HCT116 (cell line): ENCODE measurements at regions of chr20 and their contacts with region 1.

Region 1: DNA sequence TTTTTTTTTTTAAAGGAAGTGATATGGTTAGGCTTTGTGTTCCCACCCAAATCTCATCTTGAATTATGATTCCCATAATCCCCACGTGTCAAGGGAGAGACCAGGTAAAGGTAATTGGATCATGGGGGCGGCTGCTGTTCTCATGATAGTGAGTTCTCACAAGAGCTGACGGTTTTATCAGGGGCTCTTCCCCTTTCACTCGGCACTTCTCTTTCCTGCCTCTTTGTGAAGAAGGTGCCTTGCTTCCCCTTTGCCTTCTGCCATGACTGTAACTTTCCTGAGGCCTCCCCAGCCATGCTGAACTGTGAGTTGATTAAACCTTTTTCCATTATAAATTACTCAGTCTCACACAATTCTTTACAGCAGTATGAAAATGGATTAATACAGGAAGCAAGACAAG is 64.3 kb downstream of the ZFP64 start:
- DNase-seq: no peak
- ATAC-seq: no peak
- H3K4me3 ChIP-seq: no peak overlapping the region
- H3K27ac ChIP-seq: no peak overlapping the region
- H3K4me1 ChIP-seq: no peaks in the 10 kb centered on the region
- H3K27me3 ChIP-seq: no peaks in the 10 kb centered on the region
- CTCF ChIP-seq: no peak
- POLR2A ChIP-seq: no peak
- RAD21 ChIP-seq: no peak

Region 2: GRCh38 chr20:51789434-51789833 is 337.9 kb before region 1 on chr20:
- CTCF ChIA-PET with region 1: no interaction called
- POLR2A ChIA-PET with region 1: no interaction called
- RAD21 ChIA-PET with region 1: no interaction called
- intact Hi-C with region 1: no loop called
- DNase-seq: no peak
- ATAC-seq: no peak
- H3K4me3 ChIP-seq: no peak overlapping the region
- H3K27ac ChIP-seq: no peak overlapping the region
- H3K4me1 ChIP-seq: no peaks in the 10 kb centered on the region
- H3K27me3 ChIP-seq: no peaks in the 10 kb centered on the region
- CTCF ChIP-seq: no peak
- POLR2A ChIP-seq: no peak
- RAD21 ChIP-seq: no peak

Region 3: DNA sequence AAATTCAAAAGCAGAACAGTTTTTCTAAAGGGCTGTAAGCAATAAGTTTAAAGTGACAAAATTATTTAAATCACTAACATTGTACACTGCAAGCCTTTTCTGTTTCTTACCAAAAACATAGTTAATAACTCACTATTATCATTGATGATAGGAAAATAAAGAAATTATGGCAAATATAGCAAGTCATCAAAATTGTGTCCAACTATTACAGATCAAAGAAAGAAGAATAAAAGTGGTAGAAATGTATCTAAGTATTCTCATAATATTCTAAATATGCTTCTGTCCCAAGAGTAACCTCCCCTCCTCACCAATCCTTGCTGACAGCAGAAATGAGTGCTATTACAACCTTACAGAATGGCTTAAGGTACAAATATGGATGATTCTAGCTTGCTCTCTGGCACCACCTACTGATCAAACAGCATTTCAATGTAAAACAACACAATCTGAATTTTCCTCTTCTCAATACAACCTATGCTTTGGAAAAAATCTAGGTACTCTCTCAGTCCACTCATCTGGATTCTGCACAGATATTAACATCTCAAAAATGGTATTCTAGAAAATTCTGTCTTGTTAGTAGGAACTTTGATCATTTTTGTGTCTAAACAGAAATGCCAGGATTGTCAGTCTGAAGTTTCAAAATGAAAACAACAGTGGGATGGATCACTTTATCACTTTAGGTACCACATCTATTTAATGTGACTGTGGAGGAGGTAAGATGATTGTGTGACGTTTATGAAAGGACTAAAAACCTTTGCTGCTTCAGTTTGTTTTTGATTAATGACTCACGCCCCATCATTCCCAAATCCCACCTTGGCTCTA is 23.3 kb after region 1 on chr20:
- CTCF ChIA-PET with region 1: interaction called, 13 read pairs
- POLR2A ChIA-PET with region 1: no interaction called
- RAD21 ChIA-PET with region 1: no interaction called
- intact Hi-C with region 1: no loop called
- DNase-seq: peak; percentile 33
- ATAC-seq: peak; percentile 81
- H3K4me3 ChIP-seq: no peak overlapping the region
- H3K27ac ChIP-seq: no peak overlapping the region
- H3K4me1 ChIP-seq: no peaks in the 10 kb centered on the region
- H3K27me3 ChIP-seq: no peaks in the 10 kb centered on the region
- CTCF ChIP-seq: peak; percentile 40 to 84 (median 76); a peak in 5 of 6 replicates
- POLR2A ChIP-seq: no peak
- RAD21 ChIP-seq: peak; percentile 56

Region 4: GRCh38 chr20:52219441-52219840 is 92.1 kb after region 1 on chr20:
- CTCF ChIA-PET with region 1: interaction called, 7 read pairs
- POLR2A ChIA-PET with region 1: no interaction called
- RAD21 ChIA-PET with region 1: no interaction called
- intact Hi-C with region 1: loop called (anchors 1 kb)
- DNase-seq: no peak
- ATAC-seq: peak; percentile 80
- H3K4me3 ChIP-seq: no peak overlapping the region
- H3K27ac ChIP-seq: no peak overlapping the region
- H3K4me1 ChIP-seq: no peaks in the 10 kb centered on the region
- H3K27me3 ChIP-seq: no peaks in the 10 kb centered on the region
- CTCF ChIP-seq: peak; percentile 25 to 45 (median 34); a peak in 3 of 6 replicates
- POLR2A ChIP-seq: no peak
- RAD21 ChIP-seq: peak; percentile 49

Region 5: DNA sequence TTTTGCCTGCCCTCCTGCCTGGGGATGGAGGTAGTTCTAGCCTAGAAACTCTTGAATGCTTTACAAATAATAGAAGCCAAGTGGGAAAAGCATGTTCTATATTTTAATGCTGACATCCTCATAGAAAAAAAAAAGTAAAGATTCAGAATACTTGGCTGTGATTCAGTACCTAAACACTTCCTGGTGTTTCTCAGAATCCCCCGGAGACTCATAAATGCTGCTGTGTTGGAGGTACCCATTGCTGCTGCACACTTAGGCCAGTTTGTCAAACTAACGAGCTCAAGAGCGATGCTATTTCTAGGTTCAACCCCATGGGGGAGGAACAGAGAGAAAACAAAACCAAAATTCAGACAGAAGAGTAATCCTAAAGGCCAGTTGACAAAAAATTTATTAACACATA is 103.1 kb after region 1 on chr20:
- CTCF ChIA-PET with region 1: no interaction called
- POLR2A ChIA-PET with region 1: no interaction called
- RAD21 ChIA-PET with region 1: no interaction called
- intact Hi-C with region 1: loop called (anchors 5 kb)
- DNase-seq: no peak
- ATAC-seq: no peak
- H3K4me3 ChIP-seq: no peak overlapping the region
- H3K27ac ChIP-seq: no peak overlapping the region
- H3K4me1 ChIP-seq: no peaks in the 10 kb centered on the region
- H3K27me3 ChIP-seq: no peaks in the 10 kb centered on the region
- CTCF ChIP-seq: no peak
- POLR2A ChIP-seq: no peak
- RAD21 ChIP-seq: no peak

Region 6: DNA sequence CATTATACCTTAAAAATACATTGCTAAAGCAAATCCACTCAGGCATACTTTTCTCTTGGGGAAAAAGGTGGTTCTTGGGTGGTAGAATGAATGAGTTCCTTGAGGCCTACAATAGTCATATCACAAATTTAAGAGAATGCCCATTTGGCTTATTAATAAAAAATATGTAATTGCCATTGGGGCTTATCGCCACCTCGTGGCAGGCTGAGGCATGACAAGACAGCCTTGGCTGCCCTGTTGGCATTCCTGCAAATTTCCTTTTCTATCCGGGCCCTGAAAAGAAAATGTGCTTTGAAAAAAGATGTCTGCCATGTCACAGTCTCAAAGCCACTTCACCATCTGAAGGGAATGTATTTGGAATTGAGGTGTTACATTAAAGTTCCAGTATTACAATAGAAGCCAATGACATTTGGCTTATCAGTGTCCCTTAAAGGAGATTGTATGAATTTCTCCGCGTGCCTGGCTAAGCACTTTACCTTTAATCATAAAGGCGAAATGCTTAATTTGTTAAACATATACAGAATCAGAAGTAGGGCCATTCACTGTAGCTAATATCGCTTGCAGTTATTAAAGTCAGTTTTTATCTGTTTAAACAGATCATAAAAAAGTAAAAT is 252.5 kb after region 1 on chr20:
- CTCF ChIA-PET with region 1: interaction called, 5 read pairs
- POLR2A ChIA-PET with region 1: no interaction called
- RAD21 ChIA-PET with region 1: no interaction called
- intact Hi-C with region 1: loop called (anchors 2 kb)
- DNase-seq: no peak
- ATAC-seq: 0 out of 2 replicates have a peak, but pooled peaks have one; percentile 38
- H3K4me3 ChIP-seq: no peak overlapping the region
- H3K27ac ChIP-seq: no peak overlapping the region
- H3K4me1 ChIP-seq: no peaks in the 10 kb centered on the region
- H3K27me3 ChIP-seq: no peaks in the 10 kb centered on the region; the same call in 1 of the 2 replicates
- CTCF ChIP-seq: peak; percentile 41 to 96 (median 93); a peak in 5 of 6 replicates
- POLR2A ChIP-seq: no peak
- RAD21 ChIP-seq: peak; percentile 58

Region 7: DNA sequence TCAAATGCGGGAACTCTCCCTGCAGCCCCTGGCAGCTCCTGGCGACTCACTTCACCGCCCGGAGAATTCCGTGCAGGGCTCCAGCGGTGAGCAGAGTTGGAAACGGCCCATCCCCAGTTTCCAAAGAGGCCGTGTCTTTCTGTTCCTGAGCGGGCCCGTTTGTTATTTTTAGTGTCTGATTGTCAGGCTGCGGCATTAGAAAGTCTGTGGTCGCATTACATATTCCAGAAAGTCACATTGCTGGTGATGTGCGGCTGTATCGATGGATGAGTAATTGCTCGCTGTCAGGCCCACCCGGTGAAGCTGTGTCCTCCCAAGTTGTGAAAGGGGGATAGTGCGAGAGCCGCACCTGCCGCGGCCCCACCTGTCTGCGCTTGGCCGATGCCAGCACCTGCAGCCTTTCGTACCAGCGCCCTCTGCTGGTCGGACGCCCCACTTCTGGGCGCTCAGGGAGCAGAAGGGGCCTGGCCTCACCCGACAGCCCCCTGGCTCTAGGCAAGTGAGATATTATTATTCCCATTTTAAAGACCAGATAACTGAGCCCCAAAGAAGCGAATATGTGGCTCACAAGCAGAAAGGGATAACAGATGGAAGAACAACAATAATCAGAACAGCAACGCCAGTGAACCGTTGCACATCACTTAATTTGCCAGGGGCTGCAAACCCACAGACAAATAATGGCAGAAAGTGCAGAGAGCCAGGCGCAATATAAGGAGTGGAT is 1089.7 kb after region 1 on chr20:
- CTCF ChIA-PET with region 1: no interaction called
- POLR2A ChIA-PET with region 1: no interaction called
- RAD21 ChIA-PET with region 1: no interaction called
- intact Hi-C with region 1: loop called (anchors 5 kb)
- DNase-seq: peak; percentile 28
- ATAC-seq: peak; percentile 99
- H3K4me3 ChIP-seq: no peak overlapping the region
- H3K27ac ChIP-seq: no peak overlapping the region
- H3K4me1 ChIP-seq: no peaks in the 10 kb centered on the region
- H3K27me3 ChIP-seq: peaks cover 18% of the 10 kb centered on the region
- CTCF ChIP-seq: peak; percentile 57 to 90 (median 83); a peak in 5 of 6 replicates
- POLR2A ChIP-seq: no peak
- RAD21 ChIP-seq: peak; percentile 69